Activated CD4-positive, alpha-beta T cell treated with anti-CD3 and anti-CD28 coated beads, Interleukin-2, amount 10 ng/mL, durations not matched to agents 24 days and 14 days (primary cell): ENCODE measurements at regions of chr5 and their contacts with region 1.

Region 1: GRCh38 chr5:132556763-132557477 is at the start of gene RAD50:
- DNase-seq: peak; percentile 98
- H3K4me3 Mint-ChIP-seq: peak within 1 kb of the TSS; percentile 89
- H3K27ac Mint-ChIP-seq: peak within 1 kb of the TSS; percentile 94
- H3K4me1 Mint-ChIP-seq: peaks cover 25% of the 10 kb centered on the region
- H3K27me3 Mint-ChIP-seq: no peaks in the 10 kb centered on the region
- total RNA-seq, gene RAD50: 37.4 and 39.5 TPM in 2 replicates

Region 2: DNA sequence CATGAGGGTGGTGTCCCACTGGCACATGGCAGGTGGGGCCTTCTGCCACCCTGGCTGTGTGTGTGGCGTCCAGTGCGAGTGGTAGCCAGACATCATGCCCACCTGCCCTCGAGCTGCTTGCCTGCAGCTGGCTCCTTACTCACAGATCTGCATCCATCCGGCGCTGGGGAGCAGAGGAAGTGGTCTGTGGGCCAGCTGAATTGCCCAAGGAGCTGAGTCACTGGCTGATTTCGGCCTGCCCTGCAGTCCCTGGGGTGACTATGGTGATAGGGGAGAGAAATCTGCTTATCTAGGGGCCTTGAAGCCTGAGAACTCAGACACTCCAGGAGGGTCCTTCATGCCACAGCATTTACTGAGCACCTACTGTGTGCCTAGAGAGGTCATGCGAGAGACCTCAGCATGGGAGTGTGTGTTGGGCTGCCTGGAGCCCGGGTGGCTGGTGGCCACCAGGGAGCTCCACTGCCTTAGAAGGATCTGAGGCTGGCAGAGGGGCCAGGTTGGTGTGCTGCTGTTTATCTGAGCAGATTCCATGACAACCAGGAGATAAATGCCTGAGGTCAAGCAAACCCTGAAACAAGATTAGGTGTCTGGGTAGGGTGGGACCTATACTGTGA is 130.3 kb before region 1 on chr5:
- intact Hi-C with region 1: no loop called
- DNase-seq: peak; percentile 91
- H3K4me3 Mint-ChIP-seq: peak overlapping the region; percentile 81
- H3K27ac Mint-ChIP-seq: peak overlapping the region; percentile 96
- H3K4me1 Mint-ChIP-seq: peaks cover 92% of the 10 kb centered on the region
- H3K27me3 Mint-ChIP-seq: no peaks in the 10 kb centered on the region

Region 3: GRCh38 chr5:132546108-132546507 is 10.8 kb before region 1 on chr5:
- intact Hi-C with region 1: loop called (anchors 1 kb)
- DNase-seq: peak; percentile 72
- H3K4me3 Mint-ChIP-seq: no peak overlapping the region
- H3K27ac Mint-ChIP-seq: peak overlapping the region; percentile 42
- H3K4me1 Mint-ChIP-seq: peaks cover 25% of the 10 kb centered on the region
- H3K27me3 Mint-ChIP-seq: peaks cover 4% of the 10 kb centered on the region

Region 4: DNA sequence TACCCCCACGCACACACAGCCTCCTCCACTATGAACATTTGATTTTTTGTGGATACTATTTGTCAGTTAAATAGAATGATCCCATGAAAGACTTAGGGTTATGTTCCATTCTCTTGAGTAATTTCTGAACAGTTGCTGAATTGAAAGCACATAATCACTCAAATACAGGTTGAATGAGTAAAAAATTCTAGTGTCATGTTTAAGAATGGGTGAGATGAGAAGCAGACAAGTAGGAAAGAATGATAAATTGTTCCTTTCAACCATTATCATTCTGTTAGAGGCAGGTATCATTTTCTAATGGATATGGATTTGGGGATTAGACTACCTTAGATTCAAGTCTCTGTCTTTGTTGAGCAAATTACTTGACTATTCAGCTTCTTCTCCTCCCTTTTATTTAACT is 19.2 kb after region 1 on chr5:
- intact Hi-C with region 1: loop called (anchors 2 kb)
- DNase-seq: no peak
- H3K4me3 Mint-ChIP-seq: no peak overlapping the region
- H3K27ac Mint-ChIP-seq: peak overlapping the region; percentile 52
- H3K4me1 Mint-ChIP-seq: peaks cover 16% of the 10 kb centered on the region
- H3K27me3 Mint-ChIP-seq: no peaks in the 10 kb centered on the region